ENCODE measurements at regions of chr1 and their contacts with region 1.

Region 1: DNA sequence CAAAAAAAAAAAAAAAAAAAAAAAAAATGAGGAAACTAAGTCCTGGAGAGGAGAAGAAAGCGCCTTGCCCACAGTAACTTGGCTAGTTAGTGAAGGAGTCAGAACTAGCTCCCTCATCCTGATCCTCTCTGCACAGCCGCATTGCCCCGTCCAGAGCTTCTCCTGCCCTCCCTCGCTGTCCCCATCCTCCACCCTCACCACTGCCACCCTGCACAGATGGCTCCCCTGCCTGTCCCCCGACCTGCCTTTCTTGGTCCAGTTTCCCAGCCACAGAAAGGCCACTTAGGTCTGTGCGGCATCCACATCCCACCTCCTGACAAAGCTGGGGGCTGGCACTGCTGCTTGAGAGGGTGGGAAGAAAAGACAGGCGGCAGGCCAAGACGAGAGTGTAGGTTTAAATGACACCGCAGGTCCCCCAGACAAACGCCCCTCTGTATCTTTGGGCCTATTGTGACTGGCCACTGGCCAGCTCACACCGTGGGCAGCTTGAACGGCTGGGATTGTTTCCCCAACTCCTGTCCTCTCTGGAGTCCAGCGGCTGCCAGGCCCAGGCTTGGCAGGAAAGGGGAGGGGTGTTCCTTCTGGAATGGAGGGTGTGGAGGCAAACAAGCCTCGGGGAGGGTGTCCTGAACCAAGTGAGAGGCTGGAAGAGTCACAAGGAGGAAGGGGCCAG is 20.2 kb downstream of the NCMAP start:
- DNase-seq: peak in 1 of 2 donors; percentile 44
- H3K4me3 ChIP-seq: peak overlapping the region in 1 of 3 donors; percentile 15
- H3K27ac ChIP-seq: peak overlapping the region; percentile 71 to 80
- H3K4me1 ChIP-seq: no peaks in the 10 kb centered on the region
- H3K27me3 ChIP-seq: no peaks in the 10 kb centered on the region
- CTCF ChIP-seq: no peak
- POLR2A ChIP-seq: no peak

Region 2: DNA sequence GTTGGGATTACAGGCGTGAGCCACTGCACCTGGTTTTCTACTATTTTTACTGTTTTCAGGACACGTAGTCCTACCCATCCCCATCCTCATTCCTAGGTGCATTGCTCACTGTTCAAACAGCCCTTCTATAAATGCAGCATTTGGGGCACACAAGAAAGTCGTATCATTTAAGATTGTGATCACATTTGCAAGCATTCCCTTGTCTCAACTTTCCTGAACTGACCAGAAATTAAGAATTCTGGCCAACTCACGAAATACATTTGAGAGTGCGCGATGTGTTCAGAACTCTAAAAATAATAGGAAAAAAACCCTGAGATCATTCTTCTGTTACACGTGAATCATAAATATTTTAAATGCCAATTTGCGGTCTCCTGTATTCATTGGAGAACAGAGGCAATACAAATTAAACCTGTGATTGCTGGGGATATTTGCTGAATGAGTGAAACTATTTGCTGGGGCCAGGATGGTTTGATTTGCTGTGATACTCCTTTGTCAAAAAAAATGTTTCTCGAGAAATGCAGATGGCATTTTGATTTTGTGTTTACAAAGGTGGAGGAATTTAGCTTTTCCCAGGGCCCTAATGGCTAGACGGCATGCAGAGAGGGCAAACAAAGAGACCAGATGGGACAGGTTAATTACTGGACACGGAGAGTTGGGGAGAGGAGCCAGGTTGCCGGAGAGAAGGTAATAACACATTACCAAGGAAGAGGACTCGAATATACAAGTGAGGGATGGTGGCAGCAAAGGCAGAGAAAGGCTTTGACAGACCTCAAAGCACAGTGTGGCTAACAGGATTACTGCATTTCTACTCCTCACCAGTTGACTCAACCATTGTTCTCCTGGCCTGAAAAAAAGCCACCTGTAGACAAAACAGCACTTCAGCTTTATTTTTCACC is 200.9 kb before region 1 on chr1:
- intact Hi-C with region 1: no loop called
- DNase-seq: no peak
- H3K4me3 ChIP-seq: no peak overlapping the region
- H3K27ac ChIP-seq: no peak overlapping the region
- H3K4me1 ChIP-seq: no peaks in the 10 kb centered on the region
- H3K27me3 ChIP-seq: no peaks in the 10 kb centered on the region
- CTCF ChIP-seq: no peak
- POLR2A ChIP-seq: no peak

Region 3: DNA sequence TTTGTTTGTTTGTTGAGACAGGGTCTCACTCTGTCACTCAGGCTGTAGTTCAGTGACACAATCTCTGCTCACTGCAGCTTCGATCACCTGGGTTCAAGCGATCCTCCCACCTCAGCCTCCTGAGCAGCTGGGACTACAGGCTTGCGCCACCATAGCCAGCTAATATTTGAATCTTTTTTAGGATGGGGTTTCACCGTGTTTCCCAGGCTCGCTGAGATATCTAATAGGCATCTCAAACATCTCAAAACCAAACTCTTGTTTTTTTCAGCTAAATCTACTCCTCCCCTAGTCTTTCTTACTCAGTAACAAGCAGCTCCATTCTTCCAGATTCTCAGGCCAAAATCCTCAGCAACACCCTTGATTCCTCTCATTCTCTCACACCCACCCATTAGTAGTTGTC is 45.1 kb after region 1 on chr1:
- intact Hi-C with region 1: loop called (anchors 10 kb)
- DNase-seq: no peak
- H3K4me3 ChIP-seq: no peak overlapping the region
- H3K27ac ChIP-seq: peak overlapping the region in 1 of 2 donors; percentile 80
- H3K4me1 ChIP-seq: peaks cover 0 to 3% of the 10 kb centered on the region in 2 donors
- H3K27me3 ChIP-seq: no peaks in the 10 kb centered on the region
- CTCF ChIP-seq: no peak
- POLR2A ChIP-seq: no peak

Region 4: GRCh38 chr1:26009796-26010460 is 1433.9 kb after region 1 on chr1:
- intact Hi-C with region 1: no loop called
- DNase-seq: no peak
- H3K4me3 ChIP-seq: no peak overlapping the region
- H3K27ac ChIP-seq: no peak overlapping the region
- H3K4me1 ChIP-seq: peaks cover 0 to 4% of the 10 kb centered on the region in 2 donors
- H3K27me3 ChIP-seq: no peaks in the 10 kb centered on the region
- CTCF ChIP-seq: no peak
- POLR2A ChIP-seq: no peak

Measured in breast epithelium (tissue), 4 donors.